Activated T-helper 2 cell treated with anti-CD3 and anti-CD28 coated beads, Interferon-gamma antibody, Interleukin-2, Interleukin-4, amounts not matched to agents 10 μg/mL and 5 μg/mL and 100 μg/mL, durations not matched to agents 14 hours and 24 hours and 36 hours (primary cell): ENCODE measurements at regions of chr16 and their contacts with region 1.

Region 1: DNA sequence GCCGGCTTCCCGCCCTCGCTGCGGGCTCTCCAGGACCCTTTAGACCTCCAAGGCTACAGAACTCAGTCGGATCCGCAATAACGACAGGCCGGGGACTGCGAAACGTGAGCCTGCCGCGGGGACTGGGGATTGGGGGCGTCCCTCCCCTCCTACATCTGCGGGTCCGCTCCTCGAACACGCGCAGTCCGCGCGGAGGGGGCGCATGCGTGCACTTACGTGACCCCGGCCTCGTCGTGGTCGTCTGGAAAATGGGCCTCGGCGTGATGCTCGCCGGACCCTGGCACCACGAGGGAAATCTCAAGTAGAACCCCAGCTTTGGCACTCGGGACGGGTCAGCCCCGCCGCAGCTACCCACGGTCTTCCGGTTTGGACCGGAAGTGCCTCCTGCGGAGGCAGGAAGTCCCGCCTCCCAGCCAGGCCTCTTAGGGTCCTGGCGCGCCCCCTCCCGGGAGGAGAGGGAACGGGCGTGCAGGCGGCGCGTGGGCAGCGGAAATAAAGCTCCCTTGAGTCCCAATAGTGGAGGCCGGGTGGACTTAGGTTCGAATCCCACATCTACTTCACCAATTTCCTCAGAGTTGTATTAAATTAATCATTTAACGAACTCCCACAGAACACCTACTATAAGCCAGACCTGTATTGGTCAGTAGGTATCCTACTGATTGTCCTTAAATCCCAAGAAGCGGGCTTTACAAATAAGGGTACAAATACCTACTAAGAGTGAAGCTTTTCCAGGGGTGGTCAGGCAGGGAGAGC is at the start of gene TAF1C:
- DNase-seq: peak; percentile 83
- H3K4me3 Mint-ChIP-seq: peak within 1 kb of the TSS; percentile 93
- H3K27ac Mint-ChIP-seq: peak within 1 kb of the TSS; percentile 84
- H3K4me1 Mint-ChIP-seq: peaks cover 11% of the 10 kb centered on the region
- H3K27me3 Mint-ChIP-seq: no peaks in the 10 kb centered on the region
- total RNA-seq, gene TAF1C: 57.5 and 64.4 TPM in 2 replicates

Region 2: DNA sequence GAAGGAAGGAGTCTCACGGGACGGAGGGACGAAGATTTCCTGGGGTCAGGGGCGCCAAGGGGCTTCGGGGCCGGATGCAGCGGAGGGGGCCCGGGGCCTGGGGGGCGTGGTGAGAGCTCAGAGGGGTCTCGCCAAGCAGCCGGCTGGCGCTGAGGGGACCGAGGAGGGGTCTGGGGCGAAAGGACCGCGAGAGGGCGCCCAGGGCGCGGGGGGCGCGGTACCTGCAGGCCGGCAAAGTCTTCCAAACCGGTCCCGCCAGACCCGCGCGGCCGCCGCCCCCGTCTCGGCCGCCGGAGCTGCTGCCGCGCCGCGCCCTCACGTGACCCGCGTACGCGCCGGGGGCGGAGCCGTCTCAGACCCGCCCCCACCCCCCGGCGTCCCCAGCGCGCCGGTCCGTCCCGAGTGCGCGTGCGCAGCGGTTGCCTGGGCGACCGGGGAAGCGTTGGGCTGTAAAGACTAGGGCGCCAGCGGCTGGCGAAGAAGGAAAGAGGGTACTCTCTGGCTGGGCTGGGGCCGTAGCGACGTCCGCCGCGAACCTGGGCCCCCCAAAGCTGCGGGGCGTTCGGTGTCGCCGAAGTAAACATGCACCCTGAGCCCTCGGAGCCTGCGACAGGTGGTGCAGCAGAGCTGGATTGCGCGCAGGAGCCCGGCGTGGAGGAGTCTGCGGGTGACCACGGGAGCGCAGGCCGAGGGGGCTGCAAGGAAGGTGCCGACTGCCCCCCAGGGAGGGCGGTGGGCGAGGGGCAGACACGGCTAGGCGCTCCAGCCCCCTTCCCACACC is 41.8 kb before region 1 on chr16 and contains the starts of genes DNAAF1 and HSDL1:
- intact Hi-C with region 1: loop called (anchors 2 kb)
- DNase-seq: peak; percentile 89
- H3K4me3 Mint-ChIP-seq: peak within 1 kb of the TSS; percentile 91
- H3K27ac Mint-ChIP-seq: peak within 1 kb of the TSS; percentile 74
- H3K4me1 Mint-ChIP-seq: peaks cover 12% of the 10 kb centered on the region
- H3K27me3 Mint-ChIP-seq: peaks cover 10% of the 10 kb centered on the region
- total RNA-seq, gene DNAAF1: 0.09 TPM in 1 of 2 replicates, not detected in the other
- total RNA-seq, gene HSDL1: 16.7 and 19.9 TPM in 2 replicates